ENCODE measurements at regions of chr14 and their contacts with region 1.

Region 1: DNA sequence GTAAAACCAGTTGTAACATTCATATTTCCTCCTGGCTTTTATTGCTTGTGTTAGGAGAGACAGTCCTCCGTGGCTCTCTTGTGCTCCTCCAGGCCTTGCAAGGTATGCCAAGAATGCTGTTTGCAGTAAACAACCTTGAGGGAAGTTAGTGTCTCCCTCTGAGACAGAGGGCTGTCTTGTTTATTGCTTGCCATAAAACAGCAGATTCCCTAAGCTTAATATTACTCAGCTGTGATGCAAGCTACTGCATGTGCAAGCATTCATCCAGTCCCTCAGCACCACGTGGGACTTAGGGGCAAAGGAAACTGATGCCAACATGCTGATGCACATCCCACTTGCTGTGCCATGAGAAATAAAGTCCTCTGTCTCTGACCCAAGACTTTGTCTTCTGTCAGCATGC is 6.6 kb downstream of the POMT2 start:
- DNase-seq: no peak
- H3K4me3 ChIP-seq: no peak overlapping the region
- H3K4me3 Mint-ChIP-seq: no peak overlapping the region
- H3K27ac ChIP-seq: no peak overlapping the region
- H3K27ac Mint-ChIP-seq: no peak overlapping the region
- H3K4me1 ChIP-seq: no peaks in the 10 kb centered on the region
- H3K4me1 Mint-ChIP-seq: no peaks in the 10 kb centered on the region
- H3K27me3 ChIP-seq: no peaks in the 10 kb centered on the region
- H3K27me3 Mint-ChIP-seq: no peaks in the 10 kb centered on the region

Region 2: DNA sequence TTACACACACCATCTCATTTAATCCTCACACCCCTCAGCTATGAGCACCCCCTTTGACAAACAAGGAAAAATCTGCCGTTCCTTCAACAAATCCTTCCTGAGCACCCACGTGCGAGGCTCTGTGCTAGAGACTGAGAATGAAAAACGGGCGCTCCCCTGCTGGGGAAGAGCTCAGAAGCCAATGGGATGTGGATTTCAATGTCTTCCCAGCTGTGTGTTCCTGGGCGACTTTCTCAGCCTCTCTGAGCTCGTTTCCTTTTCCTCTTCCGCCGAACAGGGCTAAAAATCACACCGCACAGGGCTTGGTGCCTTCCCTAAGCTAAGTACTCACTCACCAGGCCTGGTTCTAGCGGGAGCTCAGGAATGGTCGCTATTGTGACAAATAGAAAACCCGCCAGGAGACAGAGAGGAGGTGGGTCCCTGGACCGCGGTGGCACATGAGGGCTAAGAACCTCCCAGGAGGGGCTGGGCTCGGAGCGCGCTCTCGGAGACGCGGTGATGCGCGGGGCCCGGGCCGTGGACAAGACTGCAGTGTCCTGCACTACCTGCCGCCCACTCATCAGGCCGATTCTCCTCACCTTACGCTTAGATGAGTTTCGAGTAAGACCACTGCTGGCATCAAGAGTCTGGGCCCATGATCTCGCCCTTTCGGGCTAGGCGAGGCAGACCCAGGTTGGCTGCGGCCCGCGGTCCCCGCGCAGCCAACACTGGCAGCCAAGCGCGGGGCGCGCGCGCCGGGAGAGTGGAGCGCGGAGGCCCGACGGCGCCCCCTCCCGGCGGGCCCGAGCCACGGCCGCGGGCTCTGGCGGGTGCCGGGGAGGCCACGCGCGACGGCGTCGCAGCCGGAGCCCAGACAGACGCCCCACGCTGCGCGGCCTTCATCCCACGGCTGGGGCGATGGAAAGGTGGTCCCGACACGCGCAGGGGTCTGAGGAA is 189.4 kb before region 1 on chr14:
- CTCF ChIA-PET with region 1: interaction called, 13 read pairs
- POLR2A ChIA-PET with region 1: interaction called, 3 read pairs
- intact Hi-C with region 1: no loop called
- DNase-seq: peak; percentile 72 to 83 (median 79)
- H3K4me3 ChIP-seq: peak overlapping the region; percentile 66 to 82
- H3K4me3 Mint-ChIP-seq: peak overlapping the region; percentile 85 to 92 (median 88)
- H3K27ac ChIP-seq: peak overlapping the region; percentile 45
- H3K27ac Mint-ChIP-seq: peak overlapping the region; percentile 50 to 95 (median 91)
- H3K4me1 ChIP-seq: peaks cover 57% of the 10 kb centered on the region
- H3K4me1 Mint-ChIP-seq: peaks cover 17 to 59% (median 45%) of the 10 kb centered on the region in 4 donors
- H3K27me3 ChIP-seq: no peaks in the 10 kb centered on the region
- H3K27me3 Mint-ChIP-seq: peaks cover 6 to 13% of the 10 kb centered on the region in 2 donors

Region 3: GRCh38 chr14:77139540-77140358 is 174.3 kb before region 1 on chr14:
- CTCF ChIA-PET with region 1: interaction called, 12 read pairs
- POLR2A ChIA-PET with region 1: no interaction called
- intact Hi-C with region 1: loop called (anchors 5 kb)
- DNase-seq: peak in 3 of 5 donors; percentile 16 to 43 (median 37)
- H3K4me3 ChIP-seq: no peak overlapping the region
- H3K4me3 Mint-ChIP-seq: peak overlapping the region; percentile 49 to 81 (median 64)
- H3K27ac ChIP-seq: no peak overlapping the region
- H3K27ac Mint-ChIP-seq: no peak overlapping the region
- H3K4me1 ChIP-seq: peaks cover 20% of the 10 kb centered on the region
- H3K4me1 Mint-ChIP-seq: peaks cover 11 to 41% (median 16%) of the 10 kb centered on the region in 4 donors
- H3K27me3 ChIP-seq: peaks cover 30% of the 10 kb centered on the region
- H3K27me3 Mint-ChIP-seq: peaks cover 52 to 56% of the 10 kb centered on the region in 2 donors

Region 4: GRCh38 chr14:77301103-77301502 is 12.9 kb before region 1 on chr14:
- CTCF ChIA-PET with region 1: interaction called, 49 read pairs
- POLR2A ChIA-PET with region 1: interaction called, 3 read pairs
- intact Hi-C with region 1: loop called (anchors 1 kb)
- DNase-seq: peak; percentile 18 to 52 (median 28)
- H3K4me3 ChIP-seq: no peak overlapping the region
- H3K4me3 Mint-ChIP-seq: no peak overlapping the region
- H3K27ac ChIP-seq: no peak overlapping the region
- H3K27ac Mint-ChIP-seq: no peak overlapping the region
- H3K4me1 ChIP-seq: no peaks in the 10 kb centered on the region
- H3K4me1 Mint-ChIP-seq: no peaks in the 10 kb centered on the region
- H3K27me3 ChIP-seq: no peaks in the 10 kb centered on the region
- H3K27me3 Mint-ChIP-seq: no peaks in the 10 kb centered on the region

Region 5: DNA sequence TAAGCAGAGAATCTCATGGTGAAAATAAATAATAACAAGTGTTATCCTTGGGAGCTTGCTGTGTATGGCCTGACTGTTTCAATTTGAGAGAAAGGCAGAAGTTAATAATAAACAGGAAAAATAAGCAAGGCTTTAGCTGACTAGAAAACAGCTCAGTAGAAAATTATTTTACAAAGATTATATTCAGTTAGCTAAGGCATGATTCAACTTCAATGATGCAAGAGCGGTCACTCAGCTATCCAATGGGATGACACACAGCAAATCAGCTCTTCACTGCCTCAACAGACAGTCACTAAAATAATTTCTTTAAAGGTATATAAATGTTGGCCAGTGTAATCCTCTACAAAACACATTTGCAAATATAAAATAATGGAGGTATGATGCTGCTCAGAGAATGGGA is 25.4 kb after region 1 on chr14:
- CTCF ChIA-PET with region 1: interaction called, 12 read pairs
- POLR2A ChIA-PET with region 1: no interaction called
- intact Hi-C with region 1: no loop called
- DNase-seq: no peak
- H3K4me3 ChIP-seq: no peak overlapping the region
- H3K4me3 Mint-ChIP-seq: no peak overlapping the region
- H3K27ac ChIP-seq: no peak overlapping the region
- H3K27ac Mint-ChIP-seq: no peak overlapping the region
- H3K4me1 ChIP-seq: no peaks in the 10 kb centered on the region
- H3K4me1 Mint-ChIP-seq: no peaks in the 10 kb centered on the region
- H3K27me3 ChIP-seq: no peaks in the 10 kb centered on the region
- H3K27me3 Mint-ChIP-seq: no peaks in the 10 kb centered on the region